CD4-positive, alpha-beta memory T cell (primary cell): ENCODE measurements at regions of chr1 and their contacts with region 1.

Region 1: GRCh38 chr1:100459358-100460114 is 78.4 kb upstream of the GPR88 start:
- DNase-seq: peak; percentile 57 to 70 (median 62)
- H3K4me3 ChIP-seq: no peak overlapping the region
- H3K4me3 Mint-ChIP-seq: peak overlapping the region in 7 of 8 donors; percentile 40 to 75 (median 63)
- H3K27ac ChIP-seq: peak overlapping the region; percentile 8
- H3K27ac Mint-ChIP-seq: peak overlapping the region; percentile 65 to 91 (median 90)
- H3K4me1 ChIP-seq: peaks cover 70% of the 10 kb centered on the region
- H3K4me1 Mint-ChIP-seq: peaks cover 44 to 86% (median 60%) of the 10 kb centered on the region in 4 donors
- H3K27me3 ChIP-seq: no peaks in the 10 kb centered on the region
- H3K27me3 Mint-ChIP-seq: no peaks in the 10 kb centered on the region

Region 2: DNA sequence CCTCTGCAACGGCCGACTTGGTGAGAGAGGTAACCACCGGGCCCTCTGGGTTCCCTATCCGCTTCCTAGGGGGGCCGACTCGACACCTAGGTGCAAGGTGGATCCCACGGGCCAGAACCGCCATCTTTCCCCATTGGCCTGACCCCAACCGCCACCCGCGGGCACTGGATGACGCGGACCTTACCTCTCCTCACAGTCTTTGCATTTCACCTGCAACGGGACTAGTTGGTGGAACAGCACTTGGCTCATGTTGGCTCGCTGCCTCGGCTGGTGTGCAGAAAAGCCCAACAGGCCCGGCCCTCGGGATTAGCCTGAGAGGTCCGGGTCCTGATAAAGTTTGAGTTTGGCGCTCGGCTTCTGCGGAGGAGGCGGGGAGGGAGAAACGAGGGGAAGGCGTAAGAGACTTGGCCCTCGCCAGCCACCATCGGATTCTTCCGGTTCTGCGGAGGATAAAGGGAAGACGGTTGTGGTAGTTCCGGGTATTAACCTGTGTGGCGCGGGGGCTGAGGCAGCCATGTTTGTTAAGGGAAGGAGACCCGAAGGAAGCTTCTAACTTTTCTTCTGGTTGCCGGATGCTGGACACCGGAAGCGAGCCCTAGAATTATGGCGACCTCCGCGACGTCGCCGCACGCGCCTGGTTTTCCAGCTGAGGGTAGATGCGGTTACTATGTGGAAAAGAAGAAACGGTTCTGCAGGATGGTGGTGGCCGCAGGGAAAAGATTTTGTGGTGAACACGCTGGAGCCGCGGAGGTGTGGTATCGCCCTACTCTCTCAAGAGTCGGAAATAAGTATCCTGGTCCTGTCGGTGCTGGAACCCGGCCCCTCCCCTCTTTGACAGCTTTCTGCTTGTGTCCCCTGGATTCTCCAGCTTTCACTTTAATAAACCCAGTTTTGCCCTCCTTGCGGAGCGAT is 326.7 kb before region 1 on chr1 and contains the starts of genes SASS6 and TRMT13:
- CTCF ChIA-PET with region 1: no interaction called
- POLR2A ChIA-PET with region 1: no interaction called
- intact Hi-C with region 1: loop called (anchors 1 kb)
- DNase-seq: peak; percentile 93 to 97 (median 95)
- H3K4me3 ChIP-seq: peak within 1 kb of the TSS; percentile 84 to 99
- H3K4me3 Mint-ChIP-seq: peak within 1 kb of the TSS; percentile 96 to 99 (median 99)
- H3K27ac ChIP-seq: peak within 1 kb of the TSS; percentile 59
- H3K27ac Mint-ChIP-seq: peak within 1 kb of the TSS; percentile 94 to 99 (median 97)
- H3K4me1 ChIP-seq: peaks cover 29% of the 10 kb centered on the region
- H3K4me1 Mint-ChIP-seq: peaks cover 23 to 39% (median 32%) of the 10 kb centered on the region in 4 donors
- H3K27me3 ChIP-seq: no peaks in the 10 kb centered on the region
- H3K27me3 Mint-ChIP-seq: no peaks in the 10 kb centered on the region
- total RNA-seq, gene SASS6: 5.6 to 5.8 TPM
- total RNA-seq, gene TRMT13: 45.8 to 45.9 TPM

Region 3: DNA sequence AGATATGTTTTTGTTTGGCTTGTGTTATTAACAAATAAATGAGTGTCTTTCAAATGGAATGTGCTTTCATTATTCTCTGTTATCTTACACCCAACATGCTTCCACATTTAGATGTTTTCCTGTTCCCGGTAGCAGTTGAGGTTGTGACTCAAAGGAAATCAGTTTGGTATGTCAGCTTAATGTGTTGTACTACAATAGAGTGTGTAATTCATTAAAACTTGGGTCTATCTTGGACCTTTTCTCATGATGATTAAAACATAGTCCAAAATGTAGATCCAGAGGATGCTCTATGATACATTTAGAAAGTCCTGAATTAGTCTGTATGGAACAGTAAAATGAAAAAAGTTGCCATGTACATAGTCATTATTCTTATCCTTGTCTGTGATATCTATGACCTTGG is 166.8 kb before region 1 on chr1:
- CTCF ChIA-PET with region 1: interaction called, 31 read pairs
- POLR2A ChIA-PET with region 1: interaction called, 4 read pairs
- intact Hi-C with region 1: loop called (anchors 5 kb)
- DNase-seq: no peak
- H3K4me3 ChIP-seq: no peak overlapping the region
- H3K4me3 Mint-ChIP-seq: no peak overlapping the region
- H3K27ac ChIP-seq: no peak overlapping the region
- H3K27ac Mint-ChIP-seq: peak overlapping the region in 3 of 7 donors; percentile 57 to 75 (median 65)
- H3K4me1 ChIP-seq: no peaks in the 10 kb centered on the region
- H3K4me1 Mint-ChIP-seq: peaks cover 0 to 1% (median 0%) of the 10 kb centered on the region in 4 donors
- H3K27me3 ChIP-seq: no peaks in the 10 kb centered on the region
- H3K27me3 Mint-ChIP-seq: no peaks in the 10 kb centered on the region

Region 4: DNA sequence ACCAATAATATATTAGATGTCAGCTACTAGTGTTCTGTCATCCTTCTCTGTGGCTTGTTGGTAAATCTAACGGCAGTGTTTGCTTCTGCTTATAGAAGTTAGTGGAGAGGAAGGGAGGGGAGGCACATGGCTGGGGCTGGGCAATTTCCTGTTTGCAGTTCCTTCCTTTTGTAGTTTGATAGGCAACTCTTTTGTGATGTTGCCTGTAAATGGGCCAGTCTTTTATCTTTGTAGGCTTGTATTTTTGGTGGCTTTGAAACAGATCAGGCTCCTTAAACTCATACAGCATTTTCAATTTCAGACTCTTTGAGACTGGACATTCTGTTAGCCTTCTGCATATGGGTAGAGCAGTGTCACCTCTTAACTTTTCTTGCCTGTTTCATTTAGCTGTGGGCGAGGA is 59.1 kb before region 1 on chr1:
- CTCF ChIA-PET with region 1: interaction called, 30 read pairs
- POLR2A ChIA-PET with region 1: interaction called, 17 read pairs
- intact Hi-C with region 1: no loop called
- DNase-seq: peak; percentile 78 to 90 (median 86)
- H3K4me3 ChIP-seq: peak overlapping the region in 1 of 2 donors; percentile 25
- H3K4me3 Mint-ChIP-seq: peak overlapping the region; percentile 74 to 85 (median 82)
- H3K27ac ChIP-seq: peak overlapping the region; percentile 55
- H3K27ac Mint-ChIP-seq: peak overlapping the region; percentile 89 to 95 (median 92)
- H3K4me1 ChIP-seq: peaks cover 100% of the 10 kb centered on the region
- H3K4me1 Mint-ChIP-seq: peaks cover 66 to 92% (median 80%) of the 10 kb centered on the region in 4 donors
- H3K27me3 ChIP-seq: no peaks in the 10 kb centered on the region
- H3K27me3 Mint-ChIP-seq: no peaks in the 10 kb centered on the region

Region 5: GRCh38 chr1:100430325-100430813 is 29.2 kb before region 1 on chr1:
- CTCF ChIA-PET with region 1: interaction called, 76 read pairs
- POLR2A ChIA-PET with region 1: interaction called, 272 read pairs
- intact Hi-C with region 1: no loop called
- DNase-seq: no peak
- H3K4me3 ChIP-seq: no peak overlapping the region
- H3K4me3 Mint-ChIP-seq: peak overlapping the region in 3 of 8 donors; percentile 3 to 26 (median 13)
- H3K27ac ChIP-seq: no peak overlapping the region
- H3K27ac Mint-ChIP-seq: peak overlapping the region in 6 of 7 donors; percentile 35 to 76 (median 59)
- H3K4me1 ChIP-seq: peaks cover 78% of the 10 kb centered on the region
- H3K4me1 Mint-ChIP-seq: peaks cover 50 to 76% (median 64%) of the 10 kb centered on the region in 4 donors
- H3K27me3 ChIP-seq: no peaks in the 10 kb centered on the region
- H3K27me3 Mint-ChIP-seq: no peaks in the 10 kb centered on the region

Region 6: DNA sequence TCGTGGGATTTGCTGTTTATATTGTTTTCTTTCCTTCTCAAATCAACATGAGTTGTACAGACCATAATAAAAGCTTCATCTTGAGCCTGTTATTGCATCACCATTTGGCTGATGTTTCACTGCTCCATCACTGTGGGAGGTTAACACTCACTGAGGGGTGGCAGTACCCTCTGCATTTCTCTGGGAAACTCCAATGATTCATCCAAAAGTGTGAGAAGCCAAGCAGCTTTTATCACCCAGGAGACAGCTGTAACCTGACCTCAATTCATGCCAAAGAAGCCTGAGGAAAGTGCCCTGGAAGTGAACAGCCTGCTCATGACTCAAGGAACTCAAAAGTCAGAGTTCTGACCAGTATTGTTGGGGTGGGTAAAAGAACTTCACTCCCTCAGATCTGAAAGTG is 162.5 kb after region 1 on chr1:
- CTCF ChIA-PET with region 1: no interaction called
- POLR2A ChIA-PET with region 1: no interaction called
- intact Hi-C with region 1: no loop called
- DNase-seq: no peak
- H3K4me3 ChIP-seq: no peak overlapping the region
- H3K4me3 Mint-ChIP-seq: no peak overlapping the region
- H3K27ac ChIP-seq: no peak overlapping the region
- H3K27ac Mint-ChIP-seq: no peak overlapping the region
- H3K4me1 ChIP-seq: no peaks in the 10 kb centered on the region
- H3K4me1 Mint-ChIP-seq: no peaks in the 10 kb centered on the region
- H3K27me3 ChIP-seq: no peaks in the 10 kb centered on the region
- H3K27me3 Mint-ChIP-seq: peaks cover 2% of the 10 kb centered on the region in 2 donors

Region 7: GRCh38 chr1:100866041-100866900 is 406.7 kb after region 1 on chr1:
- CTCF ChIA-PET with region 1: interaction called, 13 read pairs
- POLR2A ChIA-PET with region 1: no interaction called
- intact Hi-C with region 1: loop called (anchors 1 kb)
- DNase-seq: peak in 4 of 5 donors; percentile 16 to 26 (median 22)
- H3K4me3 ChIP-seq: no peak overlapping the region
- H3K4me3 Mint-ChIP-seq: no peak overlapping the region
- H3K27ac ChIP-seq: no peak overlapping the region
- H3K27ac Mint-ChIP-seq: no peak overlapping the region
- H3K4me1 ChIP-seq: no peaks in the 10 kb centered on the region
- H3K4me1 Mint-ChIP-seq: peaks cover 0 to 1% (median 0%) of the 10 kb centered on the region in 4 donors
- H3K27me3 ChIP-seq: no peaks in the 10 kb centered on the region
- H3K27me3 Mint-ChIP-seq: peaks cover 0 to 2% of the 10 kb centered on the region in 2 donors